ENCODE measurements at regions of chr19 and their contacts with region 1.

Region 1: DNA sequence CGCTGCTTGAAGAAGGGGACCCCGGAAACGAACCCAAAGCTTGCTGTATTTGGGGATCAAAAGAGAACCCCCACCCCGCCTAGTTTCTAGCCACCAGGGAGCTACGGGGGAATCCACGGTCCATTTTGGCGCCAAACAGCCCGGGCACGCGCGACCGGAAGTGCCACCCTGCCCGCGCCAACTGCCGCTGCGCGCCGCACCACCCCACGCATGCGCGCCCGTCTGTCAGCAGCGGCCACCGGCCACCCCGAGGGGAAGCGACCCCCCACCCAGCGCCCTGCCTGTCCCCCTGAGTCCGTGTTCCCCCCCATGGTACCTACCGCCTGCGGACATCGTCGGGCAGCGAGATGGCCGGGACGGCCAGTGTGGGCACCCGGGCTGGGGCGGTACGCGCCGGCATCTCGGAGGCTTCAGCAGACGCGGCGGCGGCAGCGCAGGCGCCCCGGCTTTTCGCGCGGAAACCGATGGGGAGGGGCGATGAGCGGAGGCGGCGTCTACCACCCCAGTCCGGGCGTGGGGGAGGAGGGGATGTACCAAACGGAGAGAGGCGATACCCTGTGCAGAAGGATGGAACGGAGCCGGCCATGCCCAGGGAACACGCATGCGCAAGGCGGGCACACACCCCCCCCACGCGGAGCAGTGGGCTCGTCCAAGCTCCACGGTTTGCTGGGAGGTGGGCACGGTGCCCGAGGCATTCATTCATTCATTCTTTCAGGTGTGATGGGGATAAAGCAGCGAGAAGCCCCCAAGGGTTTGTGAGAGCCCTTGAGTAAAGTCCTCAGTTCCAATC is at the start of gene DNMT1:
- DNase-seq: peak; percentile 95 to 98 (median 96)
- ATAC-seq: peak; percentile 96 to 99 (median 98)
- H3K4me3 ChIP-seq: peak within 1 kb of the TSS; percentile 46 to 94 (median 76)
- H3K27ac ChIP-seq: peak within 1 kb of the TSS; percentile 52 to 92 (median 86)
- H3K4me1 ChIP-seq: peaks cover 0 to 53% (median 20%) of the 10 kb centered on the region in 12 donors
- H3K27me3 ChIP-seq: no peaks in the 10 kb centered on the region
- CTCF ChIP-seq: no peak
- POLR2A ChIP-seq: peak in 1 of 2 donors; percentile 71
- total RNA-seq, gene DNMT1: 16.1 to 61.6 (median 25.8) TPM

Region 2: DNA sequence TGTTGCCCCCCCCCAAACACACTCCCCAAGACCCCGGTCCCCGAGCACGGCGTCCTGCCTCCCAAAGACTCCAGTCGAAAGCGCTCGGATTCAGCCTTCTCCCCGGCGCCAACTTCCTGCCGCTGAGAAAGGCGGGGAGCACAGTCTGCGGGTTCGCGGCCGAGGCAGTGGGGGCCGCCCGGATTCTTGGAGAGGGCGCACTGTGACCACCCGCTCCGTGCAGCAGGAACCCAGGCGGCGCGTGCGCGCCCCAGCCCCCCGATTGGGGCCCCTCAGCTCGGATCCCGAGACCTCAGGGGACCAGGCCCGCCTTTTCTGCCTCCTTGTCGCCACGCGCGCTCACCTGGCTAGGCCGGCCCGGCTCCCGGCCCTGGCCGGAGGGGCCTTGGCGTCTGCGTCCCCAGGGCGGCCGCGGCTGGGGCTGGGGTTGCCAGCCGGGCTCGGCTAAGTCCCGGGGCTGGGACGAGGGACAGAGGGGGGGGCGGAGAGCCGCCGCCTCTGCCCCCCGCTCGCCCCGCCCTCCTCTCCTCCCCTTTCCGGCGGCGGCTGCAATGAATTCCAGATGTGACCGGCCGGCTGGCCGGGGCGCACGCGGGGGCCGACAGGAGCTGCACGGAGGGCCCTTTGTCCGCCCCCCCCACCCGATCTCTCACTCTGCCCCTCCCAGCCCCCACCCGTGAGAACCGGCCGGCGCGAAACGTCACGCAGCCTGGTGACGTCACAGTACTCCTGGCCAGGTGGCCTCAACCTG is 36.3 kb after region 1 on chr19 and contains the start of gene S1PR2:
- intact Hi-C with region 1: loop called in 4 of 10 experiments (anchors 5 kb)
- DNase-seq: peak; percentile 87 to 92 (median 89)
- ATAC-seq: peak; percentile 30 to 73 (median 68)
- H3K4me3 ChIP-seq: peak within 1 kb of the TSS; percentile 68 to 99 (median 90)
- H3K27ac ChIP-seq: peak within 1 kb of the TSS; percentile 54 to 99 (median 94)
- H3K4me1 ChIP-seq: peaks cover 0 to 60% (median 36%) of the 10 kb centered on the region in 12 donors
- H3K27me3 ChIP-seq: peaks cover 0 to 11% (median 0%) of the 10 kb centered on the region in 9 donors
- CTCF ChIP-seq: peak in 2 of 12 donors; percentile 7 to 10
- POLR2A ChIP-seq: peak in 1 of 2 donors; percentile 60
- total RNA-seq, gene S1PR2: 1.7 to 14.2 (median 4.4) TPM

Region 3: DNA sequence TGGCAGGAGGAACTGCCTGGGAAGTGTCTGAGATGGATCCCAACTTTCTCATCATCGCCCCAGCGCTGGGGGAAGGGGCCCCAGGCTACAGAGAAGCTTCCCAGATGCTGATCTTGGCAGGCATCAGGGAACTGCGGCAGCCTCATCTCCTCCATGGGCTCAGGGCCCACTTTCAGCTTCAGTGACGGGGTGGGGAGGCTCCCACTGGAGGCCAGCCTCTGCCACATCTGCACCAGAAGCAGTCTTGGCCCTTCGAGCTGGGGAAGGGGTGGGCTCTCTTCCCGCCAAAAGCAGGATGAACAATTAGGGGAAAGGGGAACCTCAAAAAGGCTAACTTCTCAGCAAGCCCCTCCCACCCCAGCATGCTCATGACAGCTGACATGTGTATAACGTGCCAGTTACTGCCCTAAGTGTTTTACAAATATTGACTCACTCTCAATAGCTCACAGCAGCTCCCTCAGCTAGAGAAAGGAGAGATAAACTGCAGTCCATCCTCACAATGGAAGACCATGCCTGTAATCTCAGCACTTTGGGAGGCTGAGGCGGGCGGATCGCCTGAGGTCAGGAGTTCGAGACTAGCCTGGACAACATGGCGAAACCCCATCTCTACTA is 43.6 kb after region 1 on chr19:
- intact Hi-C with region 1: loop called in 4 of 10 experiments (anchors 5 to 10 kb)
- DNase-seq: peak; percentile 59 to 87 (median 81)
- ATAC-seq: peak; percentile 17 to 81 (median 56)
- H3K4me3 ChIP-seq: no peak overlapping the region
- H3K27ac ChIP-seq: peak overlapping the region in 6 of 12 donors; percentile 2 to 75 (median 54)
- H3K4me1 ChIP-seq: peaks cover 0 to 37% (median 15%) of the 10 kb centered on the region in 12 donors
- H3K27me3 ChIP-seq: no peaks in the 10 kb centered on the region
- CTCF ChIP-seq: no peak
- POLR2A ChIP-seq: no peak

Region 4: GRCh38 chr19:10245189-10245939 is 50.7 kb after region 1 on chr19:
- intact Hi-C with region 1: loop called in 6 of 10 experiments (anchors 1 to 10 kb)
- DNase-seq: no peak
- ATAC-seq: no peak
- H3K4me3 ChIP-seq: no peak overlapping the region
- H3K27ac ChIP-seq: no peak overlapping the region
- H3K4me1 ChIP-seq: peaks cover 0 to 7% (median 0%) of the 10 kb centered on the region in 12 donors
- H3K27me3 ChIP-seq: no peaks in the 10 kb centered on the region
- CTCF ChIP-seq: no peak
- POLR2A ChIP-seq: no peak